ENCODE measurements at regions of chr5 and their contacts with region 1.

Region 1: DNA sequence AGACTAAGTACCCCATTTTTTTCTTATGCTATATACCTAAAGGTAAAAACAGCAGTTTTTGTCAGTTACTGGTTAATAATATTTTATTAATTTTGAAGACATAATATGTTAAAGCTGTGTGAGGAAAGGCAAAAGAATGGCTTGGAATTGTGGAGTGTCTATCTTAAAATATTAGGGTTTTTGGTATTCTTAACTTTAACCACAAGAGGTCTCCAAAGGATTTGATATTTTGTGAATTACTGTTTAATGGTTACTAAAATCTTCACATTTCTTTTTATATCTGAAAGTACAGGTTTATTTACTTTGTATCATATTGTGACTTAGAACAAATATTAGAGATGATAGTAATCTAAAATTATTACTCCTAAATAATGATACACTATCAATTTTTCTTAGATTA is 32.0 kb upstream of the DHFR start:
- DNase-seq: no peak
- H3K4me3 Mint-ChIP-seq: no peak overlapping the region
- H3K27ac Mint-ChIP-seq: no peak overlapping the region
- H3K4me1 Mint-ChIP-seq: no peaks in the 10 kb centered on the region
- H3K27me3 Mint-ChIP-seq: no peaks in the 10 kb centered on the region
- CTCF ChIP-seq: peak; percentile 20

Region 2: DNA sequence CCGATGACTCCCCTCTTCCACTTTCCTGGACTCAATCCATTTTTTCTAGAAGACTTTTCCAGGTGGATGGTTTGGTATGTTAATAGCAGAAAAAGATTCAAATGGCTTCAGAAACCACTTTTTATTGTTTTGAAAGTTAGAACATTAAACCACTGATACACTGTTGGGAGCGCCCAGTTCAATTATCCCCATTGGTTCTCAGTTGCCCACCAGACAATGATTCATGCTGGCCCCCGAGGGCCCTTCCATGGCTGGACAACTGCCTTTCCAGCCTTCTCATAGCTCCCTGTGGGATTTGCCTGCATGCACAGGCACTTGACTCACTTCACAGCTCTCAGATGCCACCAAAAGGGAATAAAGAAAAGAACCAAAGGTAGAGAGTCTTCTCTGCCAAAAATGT is 95.4 kb before region 1 on chr5:
- CTCF ChIA-PET with region 1: no interaction called
- intact Hi-C with region 1: no loop called
- DNase-seq: no peak
- H3K4me3 Mint-ChIP-seq: no peak overlapping the region
- H3K27ac Mint-ChIP-seq: no peak overlapping the region
- H3K4me1 Mint-ChIP-seq: no peaks in the 10 kb centered on the region
- H3K27me3 Mint-ChIP-seq: no peaks in the 10 kb centered on the region
- CTCF ChIP-seq: no peak

Region 3: GRCh38 chr5:80672140-80672736 is 14.5 kb before region 1 on chr5:
- CTCF ChIA-PET with region 1: no interaction called
- intact Hi-C with region 1: no loop called
- DNase-seq: peak; percentile 80
- H3K4me3 Mint-ChIP-seq: no peak overlapping the region
- H3K27ac Mint-ChIP-seq: no peak overlapping the region
- H3K4me1 Mint-ChIP-seq: no peaks in the 10 kb centered on the region
- H3K27me3 Mint-ChIP-seq: no peaks in the 10 kb centered on the region
- CTCF ChIP-seq: peak; percentile 80

Region 4: GRCh38 chr5:81006947-81007636 is 320.3 kb after region 1 on chr5:
- CTCF ChIA-PET with region 1: no interaction called
- intact Hi-C with region 1: no loop called
- DNase-seq: no peak
- H3K4me3 Mint-ChIP-seq: no peak overlapping the region
- H3K27ac Mint-ChIP-seq: no peak overlapping the region
- H3K4me1 Mint-ChIP-seq: peaks cover 13% of the 10 kb centered on the region
- H3K27me3 Mint-ChIP-seq: no peaks in the 10 kb centered on the region
- CTCF ChIP-seq: no peak

Region 5: GRCh38 chr5:81105261-81105877 is 418.6 kb after region 1 on chr5:
- CTCF ChIA-PET with region 1: interaction called, 9 read pairs
- intact Hi-C with region 1: loop called (anchors 2 kb)
- DNase-seq: no peak
- H3K4me3 Mint-ChIP-seq: no peak overlapping the region
- H3K27ac Mint-ChIP-seq: no peak overlapping the region
- H3K4me1 Mint-ChIP-seq: no peaks in the 10 kb centered on the region
- H3K27me3 Mint-ChIP-seq: no peaks in the 10 kb centered on the region
- CTCF ChIP-seq: no peak

Region 6: DNA sequence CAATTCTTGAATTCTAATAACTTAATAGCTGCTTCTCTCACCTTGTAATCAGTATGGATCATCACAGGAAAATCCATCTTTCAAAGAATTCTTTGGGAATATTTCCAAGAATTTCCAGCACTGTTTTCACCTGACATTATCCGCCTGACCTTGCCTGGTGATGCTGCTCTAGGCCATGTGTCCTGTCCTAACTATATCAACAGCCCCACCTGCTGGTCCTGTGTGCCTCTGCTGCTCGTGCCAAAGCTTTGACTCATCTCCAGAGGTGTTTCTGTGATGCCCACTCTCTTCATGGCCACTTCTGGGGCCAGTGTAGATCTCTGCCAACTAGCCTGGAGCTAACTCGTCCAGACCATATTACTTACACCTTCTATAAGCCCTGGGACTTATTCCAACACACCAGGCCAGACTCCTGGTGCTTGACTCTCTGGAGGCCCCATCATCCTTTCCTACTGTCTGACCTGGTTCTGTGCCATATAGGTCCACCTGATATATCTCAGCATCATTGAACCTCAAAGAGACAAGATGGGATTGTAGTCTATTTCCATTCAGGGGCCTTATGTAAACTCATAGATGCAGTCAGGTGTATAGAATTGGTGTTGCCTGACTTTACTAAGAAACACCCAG is 478.8 kb after region 1 on chr5:
- CTCF ChIA-PET with region 1: no interaction called
- intact Hi-C with region 1: loop called (anchors 2 kb)
- DNase-seq: peak; percentile 83
- H3K4me3 Mint-ChIP-seq: no peak overlapping the region
- H3K27ac Mint-ChIP-seq: no peak overlapping the region
- H3K4me1 Mint-ChIP-seq: peaks cover 18% of the 10 kb centered on the region
- H3K27me3 Mint-ChIP-seq: no peaks in the 10 kb centered on the region
- CTCF ChIP-seq: peak; percentile 77

Region 7: GRCh38 chr5:81194633-81195333 is 508.0 kb after region 1 on chr5:
- CTCF ChIA-PET with region 1: no interaction called
- intact Hi-C with region 1: loop called (anchors 1 kb)
- DNase-seq: peak; percentile 93
- H3K4me3 Mint-ChIP-seq: peak overlapping the region; percentile 10
- H3K27ac Mint-ChIP-seq: no peak overlapping the region
- H3K4me1 Mint-ChIP-seq: peaks cover 9% of the 10 kb centered on the region
- H3K27me3 Mint-ChIP-seq: no peaks in the 10 kb centered on the region
- CTCF ChIP-seq: peak; percentile 91

Measured in Calu3 (cell line).